ENCODE measurements at regions of chr13 and their contacts with region 1.

Region 1: GRCh38 chr13:35978603-35979316 is 152.4 kb downstream of the DCLK1 start:
- DNase-seq: no peak

Region 2: DNA sequence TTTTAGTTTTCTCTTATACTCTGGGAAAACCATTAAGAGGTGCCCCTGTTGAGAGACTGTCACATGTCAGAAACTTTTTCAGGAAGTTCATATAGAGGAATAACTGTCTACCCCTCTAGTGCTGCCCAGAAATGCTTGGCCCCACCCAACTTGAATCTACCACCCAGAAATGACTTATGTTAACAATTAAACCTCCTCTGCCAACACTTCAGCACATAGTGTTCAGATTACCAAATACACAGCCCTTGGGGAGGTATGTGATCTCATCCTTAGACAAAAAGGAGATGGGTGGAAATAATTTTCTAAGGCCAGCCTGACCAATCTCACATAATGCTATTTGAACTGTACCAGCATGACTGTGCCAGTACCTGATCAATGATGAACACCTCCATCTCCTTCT is 283.2 kb after region 1 on chr13:
- intact Hi-C with region 1: loop called in 1 of 2 experiments (anchors 5 kb)
- DNase-seq: no peak

Measured in posterior vena cava (tissue), 2 donors.